Activated CD4-positive, alpha-beta memory T cell treated with anti-CD3 and anti-CD28 coated beads for 36 hours (primary cell): ENCODE measurements at regions of chr6 and their contacts with region 1.

Region 1: GRCh38 chr6:90478789-90479602 is 107.9 kb downstream of the MAP3K7 start:
- DNase-seq: peak; percentile 91
- H3K4me3 Mint-ChIP-seq: peak overlapping the region; percentile 3
- H3K27ac Mint-ChIP-seq: peak overlapping the region; percentile 66
- H3K4me1 Mint-ChIP-seq: peaks cover 58% of the 10 kb centered on the region
- H3K27me3 Mint-ChIP-seq: no peaks in the 10 kb centered on the region

Region 2: DNA sequence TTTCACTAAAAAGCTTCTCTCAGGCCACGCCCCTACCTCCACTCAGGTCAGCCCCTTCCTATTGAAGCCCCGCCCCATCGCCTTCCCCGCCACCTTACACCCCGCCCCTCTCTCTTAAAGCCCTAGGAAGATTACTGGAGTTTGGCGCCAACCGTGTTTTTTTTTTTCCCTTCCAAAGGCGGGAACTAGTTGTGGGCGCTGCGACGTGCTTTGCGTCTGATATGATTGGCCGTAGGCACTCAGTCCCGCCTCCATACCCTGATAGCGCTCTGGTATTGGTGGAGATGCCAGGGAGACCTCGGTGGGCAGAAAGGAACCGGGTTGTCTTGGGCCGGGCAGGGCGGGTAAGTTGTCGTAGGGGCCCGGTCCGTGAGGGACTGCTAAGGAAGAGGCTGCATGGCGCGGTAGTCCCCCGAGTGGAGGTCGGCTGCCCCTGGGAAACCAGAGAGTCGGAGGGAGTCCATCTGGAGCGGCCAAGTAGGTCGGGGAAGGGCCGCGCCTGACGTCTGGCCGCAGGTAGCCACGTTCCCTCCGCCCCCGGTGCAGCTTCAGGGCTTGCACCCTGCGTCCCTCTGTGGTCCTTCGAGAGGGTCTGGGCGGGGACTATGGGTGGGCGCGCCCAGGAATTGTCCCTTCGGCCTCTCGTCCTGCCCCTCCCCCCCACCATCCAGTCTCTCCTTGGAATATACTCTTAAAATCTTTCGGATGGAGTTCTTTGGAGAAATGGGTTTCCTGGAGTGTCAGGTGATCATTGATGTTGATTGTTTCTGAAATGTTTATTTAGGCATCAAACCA is 649.2 kb before region 1 on chr6 and contains the start of gene CASP8AP2:
- CTCF ChIA-PET with region 1: interaction called, 3 read pairs
- POLR2A ChIA-PET with region 1: interaction called, 3 read pairs
- intact Hi-C with region 1: loop called (anchors 5 kb)
- DNase-seq: peak; percentile 98
- H3K4me3 Mint-ChIP-seq: peak within 1 kb of the TSS; percentile 99
- H3K27ac Mint-ChIP-seq: peak within 1 kb of the TSS; percentile 95
- H3K4me1 Mint-ChIP-seq: peaks cover 34% of the 10 kb centered on the region
- H3K27me3 Mint-ChIP-seq: no peaks in the 10 kb centered on the region
- total RNA-seq, gene CASP8AP2: 32.4 to 34.2 TPM

Region 3: DNA sequence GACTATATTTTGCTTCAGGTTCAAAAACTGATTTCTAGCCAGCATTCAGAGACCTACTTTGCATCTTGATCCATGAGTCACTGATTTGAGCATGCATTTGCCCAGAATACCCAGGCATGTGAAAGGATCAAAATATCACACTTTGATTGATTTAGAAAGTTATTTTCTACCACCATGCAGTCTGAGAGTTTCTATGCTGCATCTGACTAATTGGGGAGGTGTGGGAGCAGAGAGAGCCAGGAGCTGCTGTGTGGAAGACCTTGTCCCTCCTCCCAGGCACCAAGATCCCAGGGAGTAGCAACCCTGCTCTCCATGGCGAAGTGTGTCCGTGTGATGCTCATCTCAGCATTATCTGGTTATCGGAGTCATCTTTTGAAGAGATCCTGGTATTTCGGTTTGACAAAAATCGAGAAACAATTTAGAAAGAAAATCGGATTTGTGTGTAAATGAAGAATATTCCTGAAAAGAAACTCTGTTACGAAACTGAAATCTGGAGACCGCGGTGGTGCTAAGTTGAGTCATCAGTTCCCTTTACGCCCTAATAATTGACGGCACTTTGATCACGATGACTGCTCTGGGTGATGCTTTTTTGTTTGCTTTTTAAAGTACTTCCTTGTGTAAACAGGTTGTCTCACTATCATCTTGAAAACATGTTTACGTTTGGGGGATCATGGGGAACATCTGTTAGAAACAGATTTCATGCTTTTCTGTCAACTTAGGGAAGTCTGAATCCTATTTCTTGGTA is 375.8 kb before region 1 on chr6:
- CTCF ChIA-PET with region 1: interaction called, 4 read pairs
- POLR2A ChIA-PET with region 1: no interaction called
- intact Hi-C with region 1: loop called (anchors 5 kb)
- DNase-seq: peak; percentile 66
- H3K4me3 Mint-ChIP-seq: peak overlapping the region; percentile 39
- H3K27ac Mint-ChIP-seq: peak overlapping the region; percentile 63
- H3K4me1 Mint-ChIP-seq: peaks cover 67% of the 10 kb centered on the region
- H3K27me3 Mint-ChIP-seq: peaks cover 5% of the 10 kb centered on the region

Region 4: GRCh38 chr6:90274451-90275030 is 204.5 kb before region 1 on chr6:
- CTCF ChIA-PET with region 1: interaction called, 14 read pairs
- POLR2A ChIA-PET with region 1: no interaction called
- intact Hi-C with region 1: no loop called
- DNase-seq: peak; percentile 96
- H3K4me3 Mint-ChIP-seq: peak overlapping the region; percentile 27
- H3K27ac Mint-ChIP-seq: peak overlapping the region; percentile 87
- H3K4me1 Mint-ChIP-seq: peaks cover 86% of the 10 kb centered on the region
- H3K27me3 Mint-ChIP-seq: no peaks in the 10 kb centered on the region

Region 5: GRCh38 chr6:90413867-90414266 is 65.1 kb before region 1 on chr6:
- CTCF ChIA-PET with region 1: interaction called, 23 read pairs
- POLR2A ChIA-PET with region 1: interaction called, 7 read pairs
- intact Hi-C with region 1: no loop called
- DNase-seq: peak; percentile 92
- H3K4me3 Mint-ChIP-seq: peak overlapping the region; percentile 64
- H3K27ac Mint-ChIP-seq: peak overlapping the region; percentile 93
- H3K4me1 Mint-ChIP-seq: peaks cover 71% of the 10 kb centered on the region
- H3K27me3 Mint-ChIP-seq: no peaks in the 10 kb centered on the region

Region 6: DNA sequence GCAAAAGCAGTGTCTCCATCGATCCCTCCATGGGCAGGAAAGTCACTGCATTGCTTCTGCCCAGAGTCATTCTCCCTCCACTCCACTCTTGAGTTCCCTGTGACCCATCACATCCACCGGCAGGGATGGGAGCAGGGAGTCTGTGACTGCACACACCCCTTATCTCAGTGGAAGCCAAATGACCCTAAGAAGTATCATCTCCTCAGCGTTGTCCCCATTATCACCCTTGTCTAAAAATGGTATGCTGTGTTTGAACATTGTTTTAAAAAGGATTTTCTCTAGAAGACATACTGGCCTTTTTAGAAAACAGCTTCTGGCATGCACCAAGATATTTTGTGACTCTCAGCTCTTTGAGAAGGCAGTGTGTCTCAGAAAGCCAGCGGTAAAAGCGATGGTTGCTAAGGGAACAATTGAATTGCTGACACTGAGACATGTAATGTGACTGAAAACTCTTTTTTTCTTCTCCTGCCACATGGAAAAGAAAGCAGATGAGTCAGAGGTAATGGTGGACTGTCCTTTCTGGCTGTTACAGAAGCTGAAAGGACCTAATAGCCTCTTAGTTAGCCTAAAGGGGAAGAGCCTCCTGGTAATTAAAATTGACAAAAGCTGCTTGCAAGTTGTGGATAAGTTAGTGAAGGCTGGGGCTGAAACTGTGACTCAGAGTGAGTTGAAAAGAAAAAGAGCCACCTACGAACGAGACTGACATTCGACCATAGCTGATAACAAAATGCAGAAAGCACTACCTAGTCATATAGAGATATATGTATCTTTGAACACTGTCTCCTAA is 12.6 kb before region 1 on chr6:
- CTCF ChIA-PET with region 1: interaction called, 54 read pairs
- POLR2A ChIA-PET with region 1: interaction called, 6 read pairs
- intact Hi-C with region 1: loop called (anchors 1 kb)
- DNase-seq: peak; percentile 60
- H3K4me3 Mint-ChIP-seq: peak overlapping the region; percentile 27
- H3K27ac Mint-ChIP-seq: peak overlapping the region; percentile 96
- H3K4me1 Mint-ChIP-seq: peaks cover 84% of the 10 kb centered on the region
- H3K27me3 Mint-ChIP-seq: peaks cover 1% of the 10 kb centered on the region